HCT116 (cell line): ENCODE measurements at regions of chr14 and their contacts with region 1.

Region 1: DNA sequence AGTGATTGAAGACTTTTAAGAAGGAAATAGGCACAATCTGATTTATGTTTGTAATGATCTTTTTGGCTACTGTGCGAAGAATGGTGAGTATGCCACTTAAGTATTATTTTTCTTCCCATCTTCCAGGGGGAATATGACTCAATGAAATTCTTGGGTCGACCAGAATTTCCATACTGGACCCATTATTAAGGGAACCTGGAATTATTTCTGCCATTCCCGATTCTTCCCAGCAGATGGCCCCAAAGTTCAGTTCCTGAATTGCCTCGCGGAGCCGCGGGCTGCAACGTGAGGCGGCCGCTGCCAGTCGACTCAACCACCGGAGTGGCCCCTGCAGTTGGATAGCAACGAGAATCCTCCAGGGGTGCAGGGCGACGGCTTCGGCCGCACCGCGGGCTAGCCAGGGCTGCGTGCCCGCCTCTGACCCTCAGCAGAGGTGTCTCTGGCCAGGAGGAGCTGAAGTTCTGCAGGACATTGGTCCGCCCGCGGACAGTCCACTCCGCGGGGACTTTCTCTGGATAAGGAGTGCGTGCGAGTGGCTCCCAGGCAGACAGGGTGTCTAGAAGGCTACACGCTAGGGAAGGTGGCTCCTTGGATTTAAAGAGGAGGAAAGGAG is 628 bp upstream of the TSHR start:
- DNase-seq: peak; percentile 51
- ATAC-seq: peak; percentile 94
- H3K4me3 ChIP-seq: peak overlapping the region; percentile 31 to 55
- H3K27ac ChIP-seq: no peak overlapping the region
- H3K4me1 ChIP-seq: peaks cover 0 to 4% of the 10 kb centered on the region in 2 experiments; a peak in 1 of 4 replicates
- H3K27me3 ChIP-seq: no peaks in the 10 kb centered on the region
- CTCF ChIP-seq: peak; percentile 67 to 78 (median 71)
- POLR2A ChIP-seq: no peak
- RAD21 ChIP-seq: peak; percentile 86

Region 2: DNA sequence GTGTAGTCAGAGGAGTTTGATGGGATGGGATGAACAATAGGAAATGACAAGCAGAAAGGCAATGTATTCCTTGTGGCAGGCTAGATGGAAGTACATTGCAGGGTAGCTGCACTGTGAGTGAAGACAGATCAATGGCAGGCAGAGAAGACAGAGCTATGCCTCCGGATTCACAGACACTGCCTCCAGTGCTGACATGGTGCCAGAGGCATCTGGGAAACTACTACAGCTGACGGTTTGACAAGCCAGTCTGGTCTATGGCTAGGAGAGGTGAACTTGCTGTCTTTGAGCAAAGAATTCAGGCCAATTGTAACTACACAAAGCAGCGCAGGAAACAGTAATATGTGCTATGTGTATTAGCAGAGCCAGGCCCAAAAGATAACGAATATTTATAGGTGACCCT is 937.0 kb before region 1 on chr14:
- CTCF ChIA-PET with region 1: no interaction called
- POLR2A ChIA-PET with region 1: no interaction called
- RAD21 ChIA-PET with region 1: no interaction called
- intact Hi-C with region 1: no loop called
- DNase-seq: no peak
- ATAC-seq: no peak
- H3K4me3 ChIP-seq: no peak overlapping the region
- H3K27ac ChIP-seq: no peak overlapping the region
- H3K4me1 ChIP-seq: no peaks in the 10 kb centered on the region
- H3K27me3 ChIP-seq: no peaks in the 10 kb centered on the region
- CTCF ChIP-seq: no peak
- POLR2A ChIP-seq: no peak
- RAD21 ChIP-seq: no peak

Region 3: DNA sequence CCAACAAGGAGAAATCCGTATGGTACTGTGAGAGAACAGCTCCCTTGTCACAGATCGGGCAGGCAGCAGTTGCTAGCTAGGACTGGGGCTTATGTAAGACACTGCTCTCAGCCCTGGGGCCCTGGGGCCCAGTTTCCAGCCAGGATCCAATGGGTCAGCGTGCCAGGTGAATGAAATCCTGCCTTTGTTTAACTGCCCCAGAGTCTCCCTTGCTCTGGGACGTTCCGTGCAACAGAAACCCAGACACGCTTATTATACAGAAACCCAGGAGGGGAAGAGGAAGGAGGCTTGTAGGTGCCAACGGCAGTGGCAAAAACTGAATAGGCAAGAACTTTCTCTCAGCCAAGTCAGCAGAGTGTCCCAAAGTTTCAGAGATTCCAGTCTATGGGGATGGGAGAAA is 854.1 kb before region 1 on chr14:
- CTCF ChIA-PET with region 1: no interaction called
- POLR2A ChIA-PET with region 1: no interaction called
- RAD21 ChIA-PET with region 1: no interaction called
- intact Hi-C with region 1: no loop called
- DNase-seq: no peak
- ATAC-seq: no peak
- H3K4me3 ChIP-seq: no peak overlapping the region
- H3K27ac ChIP-seq: no peak overlapping the region
- H3K4me1 ChIP-seq: no peaks in the 10 kb centered on the region
- H3K27me3 ChIP-seq: no peaks in the 10 kb centered on the region
- CTCF ChIP-seq: no peak
- POLR2A ChIP-seq: no peak
- RAD21 ChIP-seq: no peak

Region 4: DNA sequence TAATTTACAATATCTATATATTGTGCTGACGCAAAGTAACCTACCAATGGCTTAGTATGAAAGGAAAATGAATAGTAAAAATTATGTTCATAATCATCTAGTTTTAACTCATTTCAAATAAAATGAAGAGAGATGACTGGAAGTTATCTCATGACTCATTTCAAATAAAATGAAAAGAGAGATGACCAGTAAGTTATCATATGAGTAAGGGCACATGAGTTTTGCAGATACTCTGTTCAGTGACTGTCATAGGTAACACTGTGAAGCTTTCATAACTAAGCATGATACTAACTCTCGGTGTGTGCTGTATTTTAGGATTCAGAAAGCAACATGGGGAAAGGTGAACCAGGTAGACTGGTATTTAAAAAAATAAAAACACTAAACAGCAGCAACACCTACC is 379.0 kb before region 1 on chr14:
- CTCF ChIA-PET with region 1: no interaction called
- POLR2A ChIA-PET with region 1: no interaction called
- RAD21 ChIA-PET with region 1: no interaction called
- intact Hi-C with region 1: no loop called
- DNase-seq: no peak
- ATAC-seq: no peak
- H3K4me3 ChIP-seq: no peak overlapping the region
- H3K27ac ChIP-seq: no peak overlapping the region
- H3K4me1 ChIP-seq: no peaks in the 10 kb centered on the region
- H3K27me3 ChIP-seq: no peaks in the 10 kb centered on the region
- CTCF ChIP-seq: no peak
- POLR2A ChIP-seq: no peak
- RAD21 ChIP-seq: no peak

Region 5: DNA sequence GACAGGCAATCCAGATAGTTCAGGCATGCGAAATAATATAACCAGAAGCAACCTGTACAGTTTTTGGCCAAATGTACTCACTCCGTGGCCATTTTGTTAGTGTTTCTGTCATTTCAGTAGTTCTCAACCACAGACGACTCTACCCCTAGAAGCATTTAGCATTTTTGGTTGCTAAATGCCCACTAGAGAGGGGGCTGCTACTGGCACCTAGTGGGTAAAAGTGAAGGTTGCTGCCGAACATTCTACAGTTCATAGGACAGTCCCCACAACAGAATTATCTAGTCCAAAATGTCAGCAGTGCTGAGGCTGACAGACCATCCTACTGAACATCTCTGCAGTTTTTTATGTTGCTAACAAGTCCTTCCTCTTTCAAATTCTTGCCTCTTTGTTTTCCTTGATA is 108.0 kb after region 1 on chr14:
- CTCF ChIA-PET with region 1: no interaction called
- POLR2A ChIA-PET with region 1: no interaction called
- RAD21 ChIA-PET with region 1: no interaction called
- intact Hi-C with region 1: loop called (anchors 1 kb)
- DNase-seq: peak; percentile 21
- ATAC-seq: peak; percentile 93
- H3K4me3 ChIP-seq: no peak overlapping the region
- H3K27ac ChIP-seq: no peak overlapping the region
- H3K4me1 ChIP-seq: no peaks in the 10 kb centered on the region
- H3K27me3 ChIP-seq: no peaks in the 10 kb centered on the region
- CTCF ChIP-seq: peak; percentile 35 to 67 (median 65); a peak in 5 of 6 replicates
- POLR2A ChIP-seq: no peak
- RAD21 ChIP-seq: peak; percentile 52

Region 6: GRCh38 chr14:81164167-81164774 is 209.5 kb after region 1 on chr14:
- CTCF ChIA-PET with region 1: no interaction called
- POLR2A ChIA-PET with region 1: no interaction called
- RAD21 ChIA-PET with region 1: no interaction called
- intact Hi-C with region 1: loop called (anchors 2 kb)
- DNase-seq: peak; percentile 83
- ATAC-seq: peak; percentile 99
- H3K4me3 ChIP-seq: no peak overlapping the region
- H3K27ac ChIP-seq: no peak overlapping the region
- H3K4me1 ChIP-seq: peaks cover 0 to 19% of the 10 kb centered on the region in 2 experiments; a peak in 3 of 4 replicates
- H3K27me3 ChIP-seq: no peaks in the 10 kb centered on the region
- CTCF ChIP-seq: peak; percentile 51 to 89 (median 85); a peak in 5 of 6 replicates
- POLR2A ChIP-seq: no peak
- RAD21 ChIP-seq: peak; percentile 78